Left lung (tissue), 14 donors: ENCODE measurements at regions of chr20 and their contacts with region 1.

Region 1: DNA sequence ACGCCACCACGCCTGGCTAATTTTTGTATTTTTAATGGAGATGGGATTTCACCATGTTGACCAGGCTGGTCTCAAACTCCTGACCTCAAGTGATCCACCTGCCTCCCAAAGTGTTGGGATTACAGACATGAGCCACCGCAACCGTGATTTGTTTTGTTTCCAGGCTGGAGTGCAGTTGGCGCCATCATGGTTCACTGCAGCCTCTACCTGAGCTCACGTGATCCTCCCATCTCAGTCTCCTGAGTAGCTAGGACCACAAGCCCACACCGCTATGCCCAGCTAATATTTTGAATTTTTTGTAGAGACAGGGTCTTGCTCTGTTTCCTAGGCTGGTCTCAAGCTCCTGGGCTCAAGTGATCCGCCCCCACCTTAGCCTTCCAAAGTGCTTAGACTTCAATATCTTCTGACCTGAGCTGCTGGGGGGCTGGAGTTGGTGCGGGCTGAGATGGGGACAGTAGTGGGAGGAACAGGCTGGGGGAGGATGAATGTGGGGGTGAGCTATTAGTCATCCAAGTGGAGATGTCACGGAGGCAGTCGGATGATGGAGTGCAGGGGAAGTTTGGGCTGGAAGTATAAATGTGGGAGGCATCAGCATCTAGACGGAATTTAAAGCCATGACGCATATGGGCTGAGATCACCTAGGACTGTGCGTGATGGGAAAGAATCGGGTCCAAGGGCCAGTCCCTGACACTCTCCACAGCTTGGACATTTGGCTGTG is 23.1 kb upstream of the ZMYND8 start:
- DNase-seq: no peak
- ATAC-seq: no peak
- H3K4me3 ChIP-seq: no peak overlapping the region
- H3K27ac ChIP-seq: no peak overlapping the region
- H3K4me1 ChIP-seq: peaks cover 6 to 19% of the 10 kb centered on the region in 2 donors
- H3K27me3 ChIP-seq: no peaks in the 10 kb centered on the region
- CTCF ChIP-seq: no peak

Region 2: GRCh38 chr20:47317127-47317895 is 62.3 kb before region 1 on chr20:
- intact Hi-C with region 1: loop called in 1 of 2 experiments (anchors 10 kb)
- DNase-seq: peak in 3 of 4 donors; percentile 72 to 89 (median 82)
- ATAC-seq: peak; percentile 42
- H3K4me3 ChIP-seq: no peak overlapping the region
- H3K27ac ChIP-seq: peak overlapping the region; percentile 94 to 98
- H3K4me1 ChIP-seq: peaks cover 57 to 90% of the 10 kb centered on the region in 2 donors
- H3K27me3 ChIP-seq: no peaks in the 10 kb centered on the region
- CTCF ChIP-seq: peak in 1 of 2 donors; percentile 7